Posterior cingulate gyrus (tissue), 11 donors: ENCODE measurements at regions of chr14 and their contacts with region 1.

Region 1: DNA sequence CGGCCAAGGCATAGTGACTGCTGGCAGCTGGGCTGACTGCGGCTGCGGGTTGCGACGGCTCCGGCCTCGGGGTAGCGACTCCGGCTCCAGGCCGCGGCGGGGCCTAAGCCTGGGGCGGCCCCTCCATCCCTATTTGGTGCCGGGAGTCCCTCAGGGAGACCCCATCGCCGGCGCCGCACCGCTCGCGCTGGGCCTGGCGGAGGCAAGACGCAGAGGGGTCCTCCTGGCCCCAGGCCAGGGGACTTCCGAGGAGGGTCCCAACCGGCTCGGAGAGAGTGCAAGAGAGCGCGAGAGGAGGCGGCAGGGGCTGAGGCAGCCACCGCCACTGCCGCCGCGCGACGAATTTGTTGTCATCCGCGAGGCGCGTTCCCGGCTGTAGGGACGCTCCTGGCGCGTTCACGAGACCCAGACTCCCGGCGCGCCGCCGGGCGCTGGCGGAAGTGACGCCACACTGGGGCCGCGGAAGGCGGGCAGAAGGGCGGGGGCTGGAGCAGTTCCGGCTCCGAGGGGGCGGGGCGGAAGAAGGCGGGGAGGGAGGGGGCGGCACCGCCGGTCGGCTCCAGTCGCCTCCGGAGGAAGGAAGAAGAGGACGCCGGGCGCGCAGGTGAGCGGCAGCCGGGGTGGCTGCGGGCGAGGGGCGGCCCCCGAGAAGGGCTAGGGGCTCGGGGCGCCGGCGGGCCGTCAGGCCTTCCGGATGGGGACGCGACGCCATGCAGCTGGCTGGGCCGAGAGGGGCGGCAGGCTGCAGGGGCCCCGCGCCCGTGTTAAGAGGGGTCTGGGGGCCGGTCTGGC is at the starts of genes ATG2B and GSKIP:
- DNase-seq: peak; percentile 90 to 99 (median 95)

Region 2: GRCh38 chr14:96391293-96392118 is 28.3 kb after region 1 on chr14:
- intact Hi-C with region 1: loop called (anchors 1 kb)
- DNase-seq: peak; percentile 90 to 99 (median 94)

Region 3: GRCh38 chr14:96519970-96520369 is 156.8 kb after region 1 on chr14:
- intact Hi-C with region 1: no loop called
- DNase-seq: no peak